PC-3 (cell line): ENCODE measurements at regions of chr11 and their contacts with region 1.

Region 1: GRCh38 chr11:32583459-32584271 is at the start of gene EIF3M:
- DNase-seq: peak; percentile 95
- ATAC-seq: peak; percentile 98
- H3K4me3 ChIP-seq: peak within 1 kb of the TSS; percentile 87
- H3K27ac ChIP-seq: peak within 1 kb of the TSS; percentile 65
- H3K4me1 ChIP-seq: peaks cover 39% of the 10 kb centered on the region
- H3K27me3 ChIP-seq: no peaks in the 10 kb centered on the region
- CTCF ChIP-seq: no peak
- total RNA-seq, gene EIF3M: 326 and 369 TPM in 2 replicates

Region 2: GRCh38 chr11:32448232-32448631 is 135.4 kb before region 1 on chr11:
- CTCF ChIA-PET with region 1: no interaction called
- POLR2A ChIA-PET with region 1: no interaction called
- intact Hi-C with region 1: no loop called
- DNase-seq: peak; percentile 74
- ATAC-seq: peak; percentile 85
- H3K4me3 ChIP-seq: no peak overlapping the region
- H3K27ac ChIP-seq: no peak overlapping the region
- H3K4me1 ChIP-seq: 0 out of 2 replicates have a peak, but pooled peaks cover 4% of the 10 kb centered on the region
- H3K27me3 ChIP-seq: no peaks in the 10 kb centered on the region
- CTCF ChIP-seq: peak; percentile 75

Region 3: GRCh38 chr11:32508780-32509179 is 74.9 kb before region 1 on chr11:
- CTCF ChIA-PET with region 1: no interaction called
- POLR2A ChIA-PET with region 1: no interaction called
- intact Hi-C with region 1: loop called (anchors 5 kb)
- DNase-seq: no peak
- ATAC-seq: no peak
- H3K4me3 ChIP-seq: no peak overlapping the region
- H3K27ac ChIP-seq: no peak overlapping the region
- H3K4me1 ChIP-seq: peaks cover 10% of the 10 kb centered on the region
- H3K27me3 ChIP-seq: no peaks in the 10 kb centered on the region
- CTCF ChIP-seq: no peak

Region 4: DNA sequence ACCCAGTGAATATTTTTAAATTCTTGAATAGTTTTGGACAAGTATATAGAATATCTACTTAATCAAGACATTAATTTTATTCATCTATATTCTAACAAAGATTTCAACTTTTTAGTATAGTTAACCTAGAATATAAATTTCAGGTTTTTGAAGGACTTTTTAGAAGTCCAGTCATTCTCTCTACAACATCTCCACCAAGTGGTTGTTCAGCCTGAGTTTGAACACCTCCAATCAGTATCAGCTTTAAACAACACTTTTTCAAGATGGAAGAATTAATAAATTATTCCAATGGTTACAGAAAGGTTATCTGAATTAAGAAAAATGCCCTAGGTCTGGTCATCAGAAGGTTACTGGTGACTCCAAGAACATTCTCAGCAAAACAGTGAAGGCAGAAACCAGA is 31.8 kb after region 1 on chr11:
- CTCF ChIA-PET with region 1: no interaction called
- POLR2A ChIA-PET with region 1: no interaction called
- intact Hi-C with region 1: no loop called
- DNase-seq: peak; percentile 28
- ATAC-seq: no peak
- H3K4me3 ChIP-seq: no peak overlapping the region
- H3K27ac ChIP-seq: no peak overlapping the region
- H3K4me1 ChIP-seq: no peaks in the 10 kb centered on the region
- H3K27me3 ChIP-seq: no peaks in the 10 kb centered on the region
- CTCF ChIP-seq: peak; percentile 51; the same call in 1 of the 2 replicates

Region 5: GRCh38 chr11:32706949-32707736 is 123.5 kb after region 1 on chr11:
- CTCF ChIA-PET with region 1: no interaction called
- POLR2A ChIA-PET with region 1: no interaction called
- intact Hi-C with region 1: loop called (anchors 2 kb)
- DNase-seq: peak; percentile 85
- ATAC-seq: peak; percentile 92
- H3K4me3 ChIP-seq: peak overlapping the region; percentile 53
- H3K27ac ChIP-seq: peak overlapping the region; percentile 98
- H3K4me1 ChIP-seq: peaks cover 36% of the 10 kb centered on the region
- H3K27me3 ChIP-seq: no peaks in the 10 kb centered on the region
- CTCF ChIP-seq: no peak

Region 6: GRCh38 chr11:33272338-33273107 is 688.9 kb after region 1 on chr11:
- CTCF ChIA-PET with region 1: no interaction called
- POLR2A ChIA-PET with region 1: interaction called, 12 read pairs
- intact Hi-C with region 1: no loop called
- DNase-seq: no peak
- ATAC-seq: no peak
- H3K4me3 ChIP-seq: no peak overlapping the region
- H3K27ac ChIP-seq: no peak overlapping the region
- H3K4me1 ChIP-seq: peaks cover 19% of the 10 kb centered on the region
- H3K27me3 ChIP-seq: no peaks in the 10 kb centered on the region
- CTCF ChIP-seq: no peak